ENCODE measurements at regions of chr20 and their contacts with region 1.

Region 1: GRCh38 chr20:31452575-31452974 is 12.1 kb downstream of the DEFB123 start:
- DNase-seq: no peak
- H3K4me3 Mint-ChIP-seq: no peak overlapping the region
- H3K27ac Mint-ChIP-seq: no peak overlapping the region
- H3K4me1 Mint-ChIP-seq: no peaks in the 10 kb centered on the region
- H3K27me3 Mint-ChIP-seq: peaks cover 13% of the 10 kb centered on the region
- CTCF ChIP-seq: no peak

Region 2: DNA sequence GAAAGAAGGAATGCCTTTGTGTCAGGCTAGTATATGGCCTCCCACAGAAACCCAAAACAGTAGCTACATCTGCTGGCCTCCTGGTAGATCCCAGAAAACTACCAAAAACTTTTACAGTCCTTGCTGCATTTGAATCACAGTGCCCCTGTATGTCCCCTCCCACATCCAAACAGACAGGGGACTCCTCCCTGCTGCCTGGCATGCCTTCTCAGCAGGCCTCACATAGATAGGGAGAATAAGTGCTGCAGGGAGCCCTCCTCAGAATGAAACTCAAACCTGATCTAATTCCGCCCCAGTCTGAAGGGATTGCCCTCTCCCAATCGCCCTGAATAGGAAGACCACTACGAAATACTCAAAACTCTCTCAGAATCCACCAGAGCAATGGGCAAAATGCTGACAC is 130.1 kb before region 1 on chr20:
- CTCF ChIA-PET with region 1: no interaction called
- intact Hi-C with region 1: loop called (anchors 10 kb)
- DNase-seq: no peak
- H3K4me3 Mint-ChIP-seq: no peak overlapping the region
- H3K27ac Mint-ChIP-seq: no peak overlapping the region
- H3K4me1 Mint-ChIP-seq: no peaks in the 10 kb centered on the region
- H3K27me3 Mint-ChIP-seq: peaks cover 32% of the 10 kb centered on the region
- CTCF ChIP-seq: no peak